CD8-positive, alpha-beta T cell (primary cell): ENCODE measurements at regions of chr16 and their contacts with region 1.

Region 1: GRCh38 chr16:77833921-77834634 is 45.7 kb downstream of the VAT1L start:
- DNase-seq: no peak
- ATAC-seq: no peak
- H3K4me3 ChIP-seq: no peak overlapping the region
- H3K4me3 Mint-ChIP-seq: no peak overlapping the region
- H3K27ac ChIP-seq: no peak overlapping the region
- H3K27ac Mint-ChIP-seq: no peak overlapping the region
- H3K4me1 ChIP-seq: no peaks in the 10 kb centered on the region
- H3K4me1 Mint-ChIP-seq: no peaks in the 10 kb centered on the region
- H3K27me3 ChIP-seq: no peaks in the 10 kb centered on the region
- H3K27me3 Mint-ChIP-seq: peaks cover 8% of the 10 kb centered on the region
- CTCF ChIP-seq: no peak

Region 2: DNA sequence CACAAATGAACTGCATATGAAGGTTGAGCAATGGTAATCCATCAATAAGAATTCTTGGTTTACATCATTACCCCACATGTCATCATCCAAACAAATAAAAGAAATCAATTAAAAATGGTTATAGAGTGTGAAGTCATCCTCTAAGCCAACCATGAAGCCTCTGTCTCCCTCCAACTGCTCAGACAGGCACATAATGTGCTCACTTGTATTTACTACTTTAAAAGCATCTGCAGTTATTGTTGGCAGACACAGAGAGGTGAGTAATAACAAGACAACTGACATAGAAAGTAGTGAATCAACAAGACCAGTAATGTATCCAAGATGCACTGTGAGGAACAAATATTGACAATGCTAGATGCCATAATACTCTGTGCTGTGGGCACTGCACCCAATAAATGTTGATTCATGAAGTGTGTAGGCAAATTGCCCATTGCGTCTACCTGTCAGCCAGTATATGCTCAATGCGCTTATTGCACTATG is 419.3 kb before region 1 on chr16:
- CTCF ChIA-PET with region 1: no interaction called
- POLR2A ChIA-PET with region 1: no interaction called
- intact Hi-C with region 1: no loop called
- DNase-seq: no peak
- ATAC-seq: no peak
- H3K4me3 ChIP-seq: no peak overlapping the region
- H3K4me3 Mint-ChIP-seq: no peak overlapping the region
- H3K27ac ChIP-seq: no peak overlapping the region
- H3K27ac Mint-ChIP-seq: no peak overlapping the region
- H3K4me1 ChIP-seq: no peaks in the 10 kb centered on the region
- H3K4me1 Mint-ChIP-seq: no peaks in the 10 kb centered on the region
- H3K27me3 ChIP-seq: peaks cover 0 to 2% of the 10 kb centered on the region in 2 experiments
- H3K27me3 Mint-ChIP-seq: peaks cover 2% of the 10 kb centered on the region
- CTCF ChIP-seq: no peak

Region 3: DNA sequence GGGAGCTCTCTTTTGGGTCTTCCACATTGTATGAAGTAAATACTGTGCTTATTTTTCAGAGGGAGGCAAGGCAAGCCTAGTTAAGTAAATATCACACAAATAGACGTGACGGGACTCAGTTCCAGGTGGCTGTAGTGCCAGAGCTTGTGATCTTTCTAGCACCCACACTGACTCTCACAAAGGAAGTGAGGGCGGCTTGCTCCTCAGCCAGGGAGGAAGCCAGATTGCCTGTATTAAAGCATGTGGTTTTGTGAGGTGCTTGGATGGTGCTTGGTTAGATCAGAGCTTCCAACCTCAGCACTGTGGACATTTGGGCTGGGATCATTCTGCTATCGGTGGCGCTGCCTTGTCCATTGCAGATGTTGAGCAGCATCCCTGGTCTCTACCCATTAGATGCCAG is 34.4 kb after region 1 on chr16:
- CTCF ChIA-PET with region 1: no interaction called
- POLR2A ChIA-PET with region 1: no interaction called
- intact Hi-C with region 1: loop called in 1 of 2 experiments (anchors 1 kb)
- DNase-seq: no peak
- ATAC-seq: no peak
- H3K4me3 ChIP-seq: no peak overlapping the region
- H3K4me3 Mint-ChIP-seq: no peak overlapping the region
- H3K27ac ChIP-seq: no peak overlapping the region
- H3K27ac Mint-ChIP-seq: no peak overlapping the region
- H3K4me1 ChIP-seq: no peaks in the 10 kb centered on the region
- H3K4me1 Mint-ChIP-seq: no peaks in the 10 kb centered on the region
- H3K27me3 ChIP-seq: no peaks in the 10 kb centered on the region
- H3K27me3 Mint-ChIP-seq: peaks cover 3% of the 10 kb centered on the region
- CTCF ChIP-seq: no peak

Region 4: DNA sequence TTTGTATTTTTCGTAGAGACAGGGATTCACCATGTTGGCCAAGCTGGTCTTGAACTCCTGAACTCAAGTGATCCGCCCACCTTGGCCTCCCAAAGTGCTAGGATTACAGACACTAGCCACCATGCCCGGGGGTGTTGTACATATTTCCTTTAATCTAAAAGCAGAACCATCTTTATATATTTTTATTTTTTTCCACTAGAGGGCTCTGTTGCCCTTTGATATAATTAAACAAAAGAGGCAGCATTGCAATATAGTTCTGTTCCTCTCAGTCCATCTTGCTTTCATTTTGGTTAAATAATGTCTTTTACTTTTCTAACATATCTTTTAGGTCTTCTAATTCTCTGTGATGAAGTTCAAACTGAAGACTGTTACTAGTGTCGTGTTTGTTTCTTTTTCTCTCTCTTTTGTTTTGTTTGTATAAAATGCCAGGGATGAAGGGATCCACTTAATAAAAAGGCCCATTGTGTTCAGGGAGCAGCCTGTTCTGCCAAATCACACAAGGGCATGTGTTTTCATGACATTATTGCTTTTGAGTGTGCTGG is 288.8 kb after region 1 on chr16:
- CTCF ChIA-PET with region 1: no interaction called
- POLR2A ChIA-PET with region 1: no interaction called
- intact Hi-C with region 1: no loop called
- DNase-seq: peak in 3 of 9 experiments; percentile 9 to 63 (median 49)
- ATAC-seq: peak; percentile 49
- H3K4me3 ChIP-seq: no peak overlapping the region
- H3K4me3 Mint-ChIP-seq: no peak overlapping the region
- H3K27ac ChIP-seq: no peak overlapping the region
- H3K27ac Mint-ChIP-seq: no peak overlapping the region
- H3K4me1 ChIP-seq: no peaks in the 10 kb centered on the region
- H3K4me1 Mint-ChIP-seq: peaks cover 3% of the 10 kb centered on the region
- H3K27me3 ChIP-seq: no peaks in the 10 kb centered on the region
- H3K27me3 Mint-ChIP-seq: no peaks in the 10 kb centered on the region
- CTCF ChIP-seq: peak; percentile 70

Region 5: DNA sequence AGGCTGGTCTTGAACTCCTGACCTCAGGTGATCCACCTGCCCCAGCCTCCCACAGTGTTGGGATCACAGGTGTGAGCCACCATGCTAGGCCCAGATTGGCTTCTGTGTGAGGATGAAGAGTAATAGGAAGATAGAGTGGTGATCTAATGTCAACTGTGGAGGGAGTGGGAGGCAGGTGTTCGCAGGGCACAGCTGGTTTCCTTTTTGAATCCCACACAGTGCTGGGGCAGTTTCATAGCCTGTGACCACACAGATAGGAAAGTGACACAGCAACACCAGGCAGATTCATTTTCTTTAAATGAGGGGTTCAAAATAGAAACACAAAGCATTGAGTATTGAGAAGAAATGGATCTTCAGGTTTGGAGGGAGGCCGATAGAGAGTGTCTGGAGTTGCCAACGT is 805.7 kb after region 1 on chr16:
- CTCF ChIA-PET with region 1: no interaction called
- POLR2A ChIA-PET with region 1: no interaction called
- intact Hi-C with region 1: no loop called
- DNase-seq: no peak
- ATAC-seq: no peak
- H3K4me3 ChIP-seq: no peak overlapping the region
- H3K4me3 Mint-ChIP-seq: no peak overlapping the region
- H3K27ac ChIP-seq: no peak overlapping the region
- H3K27ac Mint-ChIP-seq: no peak overlapping the region
- H3K4me1 ChIP-seq: no peaks in the 10 kb centered on the region
- H3K4me1 Mint-ChIP-seq: no peaks in the 10 kb centered on the region
- H3K27me3 ChIP-seq: no peaks in the 10 kb centered on the region
- H3K27me3 Mint-ChIP-seq: peaks cover 7% of the 10 kb centered on the region
- CTCF ChIP-seq: no peak